ENCODE measurements at regions of chr2 and their contacts with region 1.

Region 1: DNA sequence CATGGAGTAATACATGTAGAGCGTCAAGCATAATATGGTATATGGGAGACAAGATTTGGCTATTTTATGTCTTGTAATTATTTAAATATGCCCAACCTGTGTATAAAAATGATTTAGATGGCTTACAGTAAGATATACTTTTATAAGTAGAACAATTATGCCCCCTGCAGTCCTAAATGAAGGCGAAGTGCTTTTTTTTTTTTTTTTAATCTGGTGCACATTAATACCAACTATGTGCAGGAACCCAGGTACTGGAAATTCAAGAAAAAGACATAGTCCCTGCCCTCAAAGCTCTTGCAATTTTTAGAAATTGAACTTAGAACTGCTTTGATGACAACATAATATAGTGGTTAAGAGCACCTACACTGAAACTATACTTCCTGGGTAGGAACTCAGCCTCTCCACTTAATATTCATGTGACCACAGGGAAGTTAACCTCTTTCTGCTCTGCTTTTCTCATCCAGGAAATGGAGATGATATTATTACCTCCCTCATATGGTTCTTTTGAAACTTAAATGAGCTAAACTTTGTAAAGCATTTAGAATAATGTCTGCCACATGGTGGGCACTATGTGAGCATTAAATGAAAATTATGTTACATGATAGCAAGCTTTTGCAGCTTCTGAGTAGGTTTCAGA is 38.1 kb downstream of the AFTPH start:
- DNase-seq: no peak
- ATAC-seq: peak in 4 of 8 donors; percentile 52 to 58 (median 54)
- H3K4me3 ChIP-seq: no peak overlapping the region
- H3K27ac ChIP-seq: no peak overlapping the region
- H3K4me1 ChIP-seq: peaks cover 0 to 27% (median 7%) of the 10 kb centered on the region in 9 donors
- H3K27me3 ChIP-seq: no peaks in the 10 kb centered on the region
- CTCF ChIP-seq: peak; percentile 20 to 65 (median 41)

Region 2: DNA sequence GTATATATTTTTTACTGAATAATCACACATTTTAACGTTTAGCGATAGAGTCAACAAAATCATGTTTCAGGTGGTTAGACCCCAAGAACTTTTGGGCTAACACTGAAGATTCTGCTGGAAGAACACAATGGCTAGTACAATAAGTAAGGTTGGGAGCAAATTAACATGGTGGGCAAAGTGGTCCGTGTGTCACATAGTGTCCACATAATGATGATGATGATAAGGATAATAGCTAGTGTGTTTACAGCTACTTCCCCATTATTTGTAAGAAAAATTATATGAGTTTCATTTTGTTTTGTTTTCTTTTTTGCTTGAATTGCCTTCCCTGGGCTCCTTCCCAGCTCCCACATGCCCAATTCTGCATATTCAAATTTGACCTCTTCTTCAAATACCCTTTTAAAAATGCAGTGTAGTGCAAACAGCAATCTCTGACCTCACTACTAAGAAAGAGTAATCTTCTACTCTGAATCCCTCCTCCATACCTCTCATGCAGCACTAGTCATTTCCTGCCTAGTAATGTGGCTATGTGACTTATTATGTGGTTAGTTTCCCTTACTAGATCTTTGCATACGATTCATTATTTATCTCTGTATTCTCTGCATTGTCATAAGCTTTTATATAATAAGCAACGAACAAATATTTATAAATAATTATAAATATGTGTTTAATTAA is 526.1 kb before region 1 on chr2:
- intact Hi-C with region 1: loop called in 3 of 10 experiments (anchors 10 kb)
- DNase-seq: no peak
- ATAC-seq: no peak
- H3K4me3 ChIP-seq: no peak overlapping the region
- H3K27ac ChIP-seq: peak overlapping the region in 1 of 10 donors; percentile 10
- H3K4me1 ChIP-seq: peaks cover 0 to 17% (median 0%) of the 10 kb centered on the region in 9 donors
- H3K27me3 ChIP-seq: no peaks in the 10 kb centered on the region
- CTCF ChIP-seq: no peak

Region 3: GRCh38 chr2:64045938-64046337 is 516.3 kb before region 1 on chr2:
- intact Hi-C with region 1: loop called in 4 of 10 experiments (anchors 5 to 10 kb)
- DNase-seq: no peak
- ATAC-seq: no peak
- H3K4me3 ChIP-seq: no peak overlapping the region
- H3K27ac ChIP-seq: no peak overlapping the region
- H3K4me1 ChIP-seq: peaks cover 0 to 8% (median 7%) of the 10 kb centered on the region in 9 donors
- H3K27me3 ChIP-seq: no peaks in the 10 kb centered on the region
- CTCF ChIP-seq: no peak

Region 4: DNA sequence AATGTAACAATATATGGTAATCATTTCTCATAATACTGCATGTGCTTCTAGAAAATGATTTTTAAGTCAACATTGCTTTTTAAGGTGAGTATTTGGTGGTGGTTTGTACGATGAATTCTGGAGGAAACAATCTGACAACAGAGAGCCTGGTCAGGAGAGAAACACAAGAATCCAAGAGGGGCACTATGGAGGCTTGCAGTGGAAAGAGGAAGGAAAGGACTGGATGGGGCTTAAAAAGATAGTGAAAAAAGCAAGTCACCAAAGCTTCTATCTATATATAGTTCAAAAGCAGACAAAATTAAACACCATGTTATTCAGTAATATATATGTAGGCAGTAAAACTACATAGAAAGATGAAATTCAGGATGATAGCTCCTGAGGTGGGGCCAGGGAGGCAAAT is 200.9 kb after region 1 on chr2:
- intact Hi-C with region 1: no loop called
- DNase-seq: no peak
- ATAC-seq: no peak
- H3K4me3 ChIP-seq: no peak overlapping the region
- H3K27ac ChIP-seq: peak overlapping the region in 1 of 10 donors; percentile 15
- H3K4me1 ChIP-seq: peaks cover 0 to 18% (median 5%) of the 10 kb centered on the region in 9 donors
- H3K27me3 ChIP-seq: no peaks in the 10 kb centered on the region
- CTCF ChIP-seq: no peak